Posterior vena cava (tissue), 2 donors: ENCODE measurements at regions of chr11 and their contacts with region 1.

Region 1: GRCh38 chr11:108346451-108346850 is 120.9 kb downstream of the C11orf65 start:
- DNase-seq: no peak

Region 2: DNA sequence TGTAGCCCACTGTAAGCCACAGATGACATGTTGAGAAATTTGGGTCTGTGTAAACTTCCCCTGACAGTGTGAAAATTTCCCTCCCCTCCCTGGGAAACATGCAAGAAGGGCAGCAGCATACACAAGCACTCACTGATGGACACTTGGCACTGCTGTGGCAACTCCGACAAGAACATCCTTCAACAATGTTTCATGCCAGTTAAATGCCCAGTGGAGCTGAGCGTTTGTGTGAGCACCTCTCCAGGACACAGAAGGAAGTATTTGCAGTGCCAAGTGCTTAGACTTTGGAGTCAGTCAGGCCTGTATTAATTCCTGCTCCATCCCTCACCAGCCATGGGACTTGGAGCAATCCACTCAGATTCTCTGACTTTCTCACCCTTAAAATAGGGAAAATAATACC is 1093.2 kb after region 1 on chr11:
- intact Hi-C with region 1: loop called in 1 of 2 experiments (anchors 5 kb)
- DNase-seq: no peak

Region 3: DNA sequence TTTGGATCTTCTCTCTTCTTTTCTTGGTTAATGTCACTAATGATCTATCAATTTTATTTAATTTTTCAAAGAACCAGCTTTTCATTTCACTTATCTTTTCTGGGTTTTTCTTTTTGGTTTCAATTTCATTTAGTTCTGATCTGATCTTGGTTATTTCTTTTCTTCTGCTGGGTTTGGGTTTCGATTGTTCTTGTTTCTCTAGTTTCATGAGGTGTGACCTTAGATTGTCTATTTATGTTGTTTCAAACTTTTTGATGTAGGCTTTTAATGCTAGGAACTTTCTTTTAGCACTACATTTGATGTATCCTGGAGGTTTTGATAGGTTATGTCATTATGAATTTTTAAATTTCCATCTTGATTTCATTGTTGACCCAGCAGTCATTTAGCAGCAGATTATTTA is 1217.8 kb after region 1 on chr11:
- intact Hi-C with region 1: no loop called
- DNase-seq: no peak